ENCODE measurements at regions of chr1 and their contacts with region 1.

Region 1: DNA sequence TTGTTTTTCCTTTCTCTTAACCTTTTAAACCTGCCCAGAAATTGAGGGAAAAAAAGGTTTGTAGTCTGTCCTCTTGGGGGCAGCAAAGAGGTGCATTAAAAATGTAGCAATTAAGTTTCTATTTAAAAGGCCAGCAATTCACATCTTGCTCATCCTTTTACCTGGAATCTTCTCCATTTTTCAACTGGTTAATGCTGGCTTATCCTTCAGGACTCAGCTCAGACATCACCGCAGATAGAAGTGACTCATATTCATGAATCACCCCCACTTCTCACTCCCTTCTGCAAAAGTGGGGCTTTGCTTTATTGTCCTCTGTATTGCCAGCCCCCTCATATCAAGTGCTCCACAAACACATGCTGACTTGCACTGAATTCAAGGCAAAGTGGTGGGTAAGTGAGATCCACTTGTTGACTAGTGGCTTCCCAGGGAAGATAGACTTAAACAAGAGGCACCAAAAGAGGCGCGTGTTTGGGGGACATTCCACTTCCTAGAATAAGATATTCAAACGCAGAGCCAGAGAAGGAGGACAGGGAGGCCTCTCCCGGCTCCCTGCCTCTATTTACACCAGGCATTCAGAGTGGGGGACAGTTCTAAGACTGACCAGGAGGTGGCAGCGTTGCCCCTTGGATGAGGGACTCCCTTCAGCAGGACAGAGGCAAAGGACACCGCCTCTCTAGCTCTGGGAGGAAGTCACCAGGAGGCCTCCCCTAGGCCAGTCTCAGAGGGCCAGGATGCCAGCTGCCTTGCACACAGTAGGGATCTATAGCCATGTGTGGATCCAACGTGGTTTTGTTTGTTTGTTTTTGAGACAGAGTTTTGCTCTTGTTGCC is 23.2 kb upstream of the ZNF648 start:
- DNase-seq: peak; percentile 72 to 76 (median 74)
- H3K4me3 ChIP-seq: no peak overlapping the region
- H3K4me3 Mint-ChIP-seq: peak overlapping the region in 4 of 8 donors; percentile 13 to 58 (median 16)
- H3K27ac ChIP-seq: peak overlapping the region; percentile 21
- H3K27ac Mint-ChIP-seq: peak overlapping the region; percentile 59 to 90 (median 79)
- H3K4me1 ChIP-seq: peaks cover 51% of the 10 kb centered on the region
- H3K4me1 Mint-ChIP-seq: peaks cover 30 to 51% (median 46%) of the 10 kb centered on the region in 4 donors
- H3K27me3 ChIP-seq: no peaks in the 10 kb centered on the region
- H3K27me3 Mint-ChIP-seq: no peaks in the 10 kb centered on the region

Region 2: GRCh38 chr1:181479137-181479745 is 605.5 kb before region 1 on chr1:
- CTCF ChIA-PET with region 1: interaction called, 67 read pairs
- POLR2A ChIA-PET with region 1: no interaction called
- intact Hi-C with region 1: loop called (anchors 1 kb)
- DNase-seq: peak in 3 of 5 donors; percentile 18 to 31 (median 19)
- H3K4me3 ChIP-seq: no peak overlapping the region
- H3K4me3 Mint-ChIP-seq: no peak overlapping the region
- H3K27ac ChIP-seq: no peak overlapping the region
- H3K27ac Mint-ChIP-seq: no peak overlapping the region
- H3K4me1 ChIP-seq: peaks cover 10% of the 10 kb centered on the region
- H3K4me1 Mint-ChIP-seq: peaks cover 1 to 13% (median 6%) of the 10 kb centered on the region in 4 donors
- H3K27me3 ChIP-seq: peaks cover 10% of the 10 kb centered on the region
- H3K27me3 Mint-ChIP-seq: peaks cover 24 to 27% of the 10 kb centered on the region in 2 donors

Region 3: DNA sequence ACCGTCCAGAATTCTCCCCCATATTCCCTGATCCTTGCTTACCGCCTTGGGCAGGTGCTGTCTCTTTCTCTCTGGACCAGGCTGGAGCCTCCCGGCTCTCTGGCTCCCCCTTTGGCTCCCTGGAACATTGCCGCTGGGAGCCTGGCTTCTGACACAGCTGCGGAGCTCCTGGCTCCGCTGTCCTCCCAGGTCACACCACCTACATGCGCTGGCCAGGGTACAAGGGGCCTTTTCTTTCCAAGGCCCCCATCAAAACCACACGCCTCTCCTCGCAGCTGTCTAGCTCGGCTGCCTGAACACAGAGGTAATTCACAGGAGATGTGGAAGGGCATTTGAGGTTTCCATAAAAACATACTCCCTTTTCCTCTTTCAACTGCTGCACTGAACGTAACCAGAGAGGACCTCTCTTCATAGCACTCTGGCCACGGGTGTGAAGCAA is 15.7 kb before region 1 on chr1:
- CTCF ChIA-PET with region 1: interaction called, 26 read pairs
- POLR2A ChIA-PET with region 1: no interaction called
- intact Hi-C with region 1: no loop called
- DNase-seq: peak in 1 of 5 donors; percentile 6
- H3K4me3 ChIP-seq: no peak overlapping the region
- H3K4me3 Mint-ChIP-seq: peak overlapping the region in 1 of 8 donors; percentile 32
- H3K27ac ChIP-seq: no peak overlapping the region
- H3K27ac Mint-ChIP-seq: no peak overlapping the region
- H3K4me1 ChIP-seq: no peaks in the 10 kb centered on the region
- H3K4me1 Mint-ChIP-seq: peaks cover 0 to 6% (median 3%) of the 10 kb centered on the region in 4 donors
- H3K27me3 ChIP-seq: no peaks in the 10 kb centered on the region
- H3K27me3 Mint-ChIP-seq: peaks cover 18 to 19% of the 10 kb centered on the region in 2 donors

Region 4: DNA sequence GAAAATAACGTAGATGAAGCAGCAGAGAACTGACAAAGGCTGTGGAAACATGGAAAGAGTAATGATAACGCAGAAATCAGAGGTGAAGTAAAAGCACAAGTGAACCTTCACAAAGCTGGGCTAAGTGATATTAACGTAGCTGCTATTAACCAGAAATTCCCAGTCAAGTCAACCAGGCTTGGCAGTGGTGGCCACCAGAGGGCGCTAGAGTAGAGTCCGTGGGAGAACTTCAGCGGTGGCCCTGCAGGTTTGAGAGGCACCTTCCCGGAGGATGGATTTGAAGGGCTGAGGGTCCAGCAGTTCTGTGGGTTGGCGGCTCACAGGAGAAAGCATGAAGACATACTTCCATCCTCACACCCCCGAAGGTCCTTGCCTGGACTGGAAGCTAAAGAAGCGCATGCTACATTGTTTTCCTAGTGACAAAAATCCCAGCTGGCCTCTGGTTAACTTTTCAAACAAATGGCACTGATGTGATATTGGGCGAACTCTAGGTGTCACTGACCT is 58.5 kb after region 1 on chr1:
- CTCF ChIA-PET with region 1: interaction called, 153 read pairs
- POLR2A ChIA-PET with region 1: interaction called, 11 read pairs
- intact Hi-C with region 1: loop called (anchors 1 kb)
- DNase-seq: peak; percentile 73 to 79 (median 79)
- H3K4me3 ChIP-seq: no peak overlapping the region
- H3K4me3 Mint-ChIP-seq: no peak overlapping the region
- H3K27ac ChIP-seq: no peak overlapping the region
- H3K27ac Mint-ChIP-seq: no peak overlapping the region
- H3K4me1 ChIP-seq: no peaks in the 10 kb centered on the region
- H3K4me1 Mint-ChIP-seq: peaks cover 0 to 6% (median 5%) of the 10 kb centered on the region in 4 donors
- H3K27me3 ChIP-seq: no peaks in the 10 kb centered on the region
- H3K27me3 Mint-ChIP-seq: peaks cover 5 to 9% of the 10 kb centered on the region in 2 donors

Region 5: GRCh38 chr1:182391362-182392044 is 306.8 kb after region 1 on chr1 and contains the start of gene GLUL:
- CTCF ChIA-PET with region 1: interaction called, 189 read pairs
- POLR2A ChIA-PET with region 1: interaction called, 37 read pairs
- intact Hi-C with region 1: loop called (anchors 1 kb)
- DNase-seq: peak; percentile 59 to 71 (median 61)
- H3K4me3 ChIP-seq: peak within 1 kb of the TSS; percentile 60 to 83
- H3K4me3 Mint-ChIP-seq: peak within 1 kb of the TSS; percentile 91 to 98 (median 94)
- H3K27ac ChIP-seq: peak within 1 kb of the TSS; percentile 48
- H3K27ac Mint-ChIP-seq: peak within 1 kb of the TSS; percentile 74 to 93 (median 89)
- H3K4me1 ChIP-seq: peaks cover 30% of the 10 kb centered on the region
- H3K4me1 Mint-ChIP-seq: peaks cover 20 to 42% (median 30%) of the 10 kb centered on the region in 4 donors
- H3K27me3 ChIP-seq: no peaks in the 10 kb centered on the region
- H3K27me3 Mint-ChIP-seq: peaks cover 1 to 2% of the 10 kb centered on the region in 2 donors
- total RNA-seq, gene GLUL: 78.5 to 96.0 TPM

Region 6: GRCh38 chr1:182595641-182596240 is 511.0 kb after region 1 on chr1:
- CTCF ChIA-PET with region 1: interaction called, 7 read pairs
- POLR2A ChIA-PET with region 1: no interaction called
- intact Hi-C with region 1: loop called (anchors 2 kb)
- DNase-seq: peak; percentile 52 to 64 (median 53)
- H3K4me3 ChIP-seq: no peak overlapping the region
- H3K4me3 Mint-ChIP-seq: no peak overlapping the region
- H3K27ac ChIP-seq: no peak overlapping the region
- H3K27ac Mint-ChIP-seq: peak overlapping the region in 2 of 7 donors; percentile 22 to 36
- H3K4me1 ChIP-seq: no peaks in the 10 kb centered on the region
- H3K4me1 Mint-ChIP-seq: peaks cover 0 to 2% (median under 1%) of the 10 kb centered on the region in 4 donors
- H3K27me3 ChIP-seq: no peaks in the 10 kb centered on the region
- H3K27me3 Mint-ChIP-seq: no peaks in the 10 kb centered on the region